Gastrocnemius medialis (tissue), 4 donors: ENCODE measurements at regions of chr2 and their contacts with region 1.

Region 1: GRCh38 chr2:71226965-71227560 is at the start of gene PAIP2B:
- DNase-seq: peak; percentile 99 to 100
- ATAC-seq: peak; percentile 92 to 94
- H3K4me3 ChIP-seq: peak within 1 kb of the TSS; percentile 83 to 93 (median 90)
- H3K27ac ChIP-seq: peak within 1 kb of the TSS; percentile 96 to 98 (median 98)
- H3K4me1 ChIP-seq: peaks cover 19% of the 10 kb centered on the region in 2 donors
- H3K27me3 ChIP-seq: no peaks in the 10 kb centered on the region
- CTCF ChIP-seq: no peak
- POLR2A ChIP-seq: peak; percentile 95 to 97
- total RNA-seq, gene PAIP2B: 14.6 to 32.6 (median 15.9) TPM

Region 2: DNA sequence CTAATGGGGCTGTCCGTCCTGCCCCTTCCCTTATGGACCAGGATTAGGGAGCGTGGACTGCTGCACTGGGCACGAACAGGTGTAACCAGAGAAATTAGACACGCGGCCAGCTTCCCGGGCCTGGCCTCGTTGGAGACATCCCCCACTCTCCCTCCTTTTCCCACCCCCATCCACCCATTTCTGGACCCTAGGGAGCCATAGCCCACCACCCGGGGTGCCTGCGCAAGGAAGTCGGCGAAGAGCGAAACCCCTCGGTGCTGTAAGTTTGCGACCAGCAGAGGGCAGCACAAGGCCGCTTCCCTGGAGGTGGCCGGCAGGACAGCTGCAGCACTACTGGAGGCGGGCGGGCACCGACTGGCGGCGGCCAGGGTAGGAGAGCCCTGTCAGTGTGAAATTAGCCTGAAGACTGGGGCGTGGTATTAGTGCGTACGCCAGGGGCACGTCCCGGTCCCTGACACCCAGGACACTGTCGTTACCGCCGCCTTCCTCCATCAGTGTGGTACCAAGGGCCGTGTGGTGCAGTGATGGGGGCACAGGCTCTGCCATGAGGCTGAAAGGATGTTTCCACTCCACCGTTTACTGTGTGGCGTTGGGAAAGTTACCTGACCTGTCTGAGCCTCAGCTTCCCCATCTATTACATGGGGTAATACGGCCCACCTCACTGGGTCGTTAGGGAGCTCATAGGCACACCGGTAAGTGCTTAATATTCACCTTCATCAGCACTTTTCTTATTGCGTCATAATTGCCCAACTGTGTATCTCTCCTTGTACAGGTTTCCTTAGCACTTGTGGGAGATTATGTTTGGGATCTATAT is 355.5 kb before region 1 on chr2:
- in situ Hi-C with region 1: no loop called
- intact Hi-C with region 1: no loop called
- DNase-seq: peak; percentile 64 to 66
- ATAC-seq: peak; percentile 88 to 90
- H3K4me3 ChIP-seq: peak overlapping the region; percentile 24 to 54 (median 38)
- H3K27ac ChIP-seq: no peak overlapping the region
- H3K4me1 ChIP-seq: peaks cover 7 to 8% of the 10 kb centered on the region in 2 donors
- H3K27me3 ChIP-seq: peaks cover 12 to 30% (median 19%) of the 10 kb centered on the region in 3 donors
- CTCF ChIP-seq: peak; percentile 70 to 98 (median 93)
- POLR2A ChIP-seq: no peak

Region 3: DNA sequence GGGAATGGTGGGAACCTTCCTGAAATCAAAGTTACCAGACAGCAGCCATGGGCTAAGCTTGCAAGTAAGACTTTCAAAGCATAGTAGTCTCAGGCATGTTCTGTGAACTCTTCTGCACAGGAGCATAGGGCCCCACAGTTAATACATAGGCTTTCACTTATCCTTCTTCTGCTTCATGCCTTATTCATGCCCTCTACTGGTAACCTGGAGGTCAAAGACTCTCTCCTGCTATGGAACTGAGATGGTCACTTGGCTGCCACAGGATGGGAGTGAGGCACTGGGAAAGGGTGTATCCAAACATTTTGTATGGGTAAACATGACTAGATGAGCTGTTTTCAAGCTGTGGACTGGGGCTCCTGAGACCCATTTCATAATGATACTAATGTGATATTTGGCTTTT is 55.4 kb after region 1 on chr2:
- in situ Hi-C with region 1: no loop called
- intact Hi-C with region 1: loop called (anchors 1 kb)
- DNase-seq: no peak
- ATAC-seq: peak; percentile 31 to 48
- H3K4me3 ChIP-seq: no peak overlapping the region
- H3K27ac ChIP-seq: peak overlapping the region; percentile 90 to 96 (median 94)
- H3K4me1 ChIP-seq: peaks cover 53 to 75% of the 10 kb centered on the region in 2 donors
- H3K27me3 ChIP-seq: no peaks in the 10 kb centered on the region
- CTCF ChIP-seq: peak in 1 of 5 experiments; percentile 23
- POLR2A ChIP-seq: no peak

Region 4: DNA sequence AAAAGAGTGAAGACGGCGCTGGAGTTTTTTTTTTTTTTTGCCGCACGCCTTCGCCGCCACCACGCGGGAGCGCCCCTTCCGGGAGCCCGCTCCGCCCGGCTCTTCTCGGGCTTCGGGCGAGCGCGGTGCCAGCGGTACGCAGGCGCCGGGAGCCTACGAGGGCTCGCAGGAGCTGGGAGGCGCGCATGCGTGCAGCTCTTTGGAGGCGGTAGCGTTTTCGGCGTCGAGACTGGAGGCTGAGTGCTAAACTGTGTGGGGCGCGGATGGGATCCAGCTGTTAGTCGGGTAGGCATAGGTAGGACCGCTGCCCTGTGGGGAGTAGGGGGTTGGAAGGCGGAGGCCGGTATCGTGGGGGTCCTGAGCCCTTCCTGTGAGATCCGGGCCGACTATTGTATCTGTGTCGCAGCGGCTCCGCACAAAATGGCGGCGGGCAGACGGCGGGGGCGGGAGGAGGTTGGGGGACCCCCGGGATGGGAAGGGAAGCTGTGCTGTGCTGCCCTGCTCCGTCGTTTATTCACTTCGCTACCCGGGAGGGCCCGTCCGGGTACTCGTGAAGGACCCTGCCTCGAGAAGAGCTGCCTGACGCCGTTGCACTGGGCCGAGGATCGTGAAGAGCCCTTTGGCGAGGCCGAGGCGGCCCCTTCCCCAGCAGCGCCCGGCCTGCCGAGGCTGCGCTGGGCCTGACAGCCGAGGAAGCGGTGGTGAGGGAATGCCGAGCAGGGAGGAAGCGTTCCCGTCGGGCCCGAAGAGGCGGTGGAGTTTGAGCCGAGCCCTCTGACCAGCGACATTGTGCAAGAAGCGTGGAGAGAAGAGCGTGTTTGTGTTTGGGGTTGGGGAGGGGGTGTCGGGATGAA is 104.7 kb after region 1 on chr2 and contains the start of gene ZNF638:
- in situ Hi-C with region 1: loop called in 2 of 4 experiments (anchors 5 to 25 kb)
- intact Hi-C with region 1: loop called (anchors 1 kb)
- DNase-seq: peak; percentile 85 to 92
- ATAC-seq: peak; percentile 91 to 94
- H3K4me3 ChIP-seq: peak within 1 kb of the TSS; percentile 81 to 98 (median 85)
- H3K27ac ChIP-seq: peak within 1 kb of the TSS; percentile 94 to 97 (median 95)
- H3K4me1 ChIP-seq: peaks cover 37 to 42% of the 10 kb centered on the region in 2 donors
- H3K27me3 ChIP-seq: no peaks in the 10 kb centered on the region
- CTCF ChIP-seq: peak; percentile 69 to 87 (median 85)
- POLR2A ChIP-seq: peak; percentile 87 to 95
- total RNA-seq, gene ZNF638: 69.7 to 152 (median 95.0) TPM